ENCODE measurements at regions of chr20 and their contacts with region 1.

Region 1: GRCh38 chr20:35619196-35620095 is 3.8 kb downstream of the SPAG4 start:
- DNase-seq: peak; percentile 71 to 81 (median 76)
- H3K4me3 ChIP-seq: peak overlapping the region; percentile 36 to 75
- H3K4me3 Mint-ChIP-seq: peak overlapping the region; percentile 84 to 97 (median 90)
- H3K27ac ChIP-seq: peak overlapping the region; percentile 40
- H3K27ac Mint-ChIP-seq: peak overlapping the region; percentile 83 to 99 (median 89)
- H3K4me1 ChIP-seq: peaks cover 39% of the 10 kb centered on the region
- H3K4me1 Mint-ChIP-seq: peaks cover 17 to 47% (median 33%) of the 10 kb centered on the region in 4 donors
- H3K27me3 ChIP-seq: no peaks in the 10 kb centered on the region
- H3K27me3 Mint-ChIP-seq: peaks cover 0 to 3% of the 10 kb centered on the region in 2 donors

Region 2: DNA sequence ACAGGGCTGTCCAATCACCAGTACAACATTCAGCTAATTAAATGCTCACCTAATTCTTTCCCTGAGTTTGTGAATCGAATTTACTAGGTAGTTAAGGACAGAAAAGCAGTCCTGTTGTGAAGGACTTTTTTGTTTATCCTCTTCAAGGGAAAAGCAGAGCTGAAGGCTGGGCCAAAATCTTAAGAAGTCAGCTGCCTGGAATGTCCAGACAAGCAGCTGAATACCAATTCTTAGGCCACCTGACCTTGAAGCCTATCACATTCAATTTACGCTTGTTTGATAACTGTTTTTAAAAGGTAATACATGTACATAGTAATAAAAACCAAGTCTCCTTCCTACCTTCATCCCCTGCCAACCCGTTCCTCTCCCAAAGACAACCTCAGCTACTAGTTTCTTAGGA is 264.1 kb before region 1 on chr20:
- CTCF ChIA-PET with region 1: no interaction called
- POLR2A ChIA-PET with region 1: no interaction called
- intact Hi-C with region 1: no loop called
- DNase-seq: no peak
- H3K4me3 ChIP-seq: no peak overlapping the region
- H3K4me3 Mint-ChIP-seq: no peak overlapping the region
- H3K27ac ChIP-seq: no peak overlapping the region
- H3K27ac Mint-ChIP-seq: peak overlapping the region in 1 of 7 donors; percentile 59
- H3K4me1 ChIP-seq: no peaks in the 10 kb centered on the region
- H3K4me1 Mint-ChIP-seq: peaks cover 0 to 2% (median 0%) of the 10 kb centered on the region in 4 donors
- H3K27me3 ChIP-seq: no peaks in the 10 kb centered on the region
- H3K27me3 Mint-ChIP-seq: no peaks in the 10 kb centered on the region

Region 3: GRCh38 chr20:35368666-35369423 is 250.6 kb before region 1 on chr20:
- CTCF ChIA-PET with region 1: no interaction called
- POLR2A ChIA-PET with region 1: no interaction called
- intact Hi-C with region 1: no loop called
- DNase-seq: no peak
- H3K4me3 ChIP-seq: no peak overlapping the region
- H3K4me3 Mint-ChIP-seq: no peak overlapping the region
- H3K27ac ChIP-seq: no peak overlapping the region
- H3K27ac Mint-ChIP-seq: no peak overlapping the region
- H3K4me1 ChIP-seq: no peaks in the 10 kb centered on the region
- H3K4me1 Mint-ChIP-seq: peaks cover 0 to 2% (median 0%) of the 10 kb centered on the region in 4 donors
- H3K27me3 ChIP-seq: no peaks in the 10 kb centered on the region
- H3K27me3 Mint-ChIP-seq: no peaks in the 10 kb centered on the region

Region 4: DNA sequence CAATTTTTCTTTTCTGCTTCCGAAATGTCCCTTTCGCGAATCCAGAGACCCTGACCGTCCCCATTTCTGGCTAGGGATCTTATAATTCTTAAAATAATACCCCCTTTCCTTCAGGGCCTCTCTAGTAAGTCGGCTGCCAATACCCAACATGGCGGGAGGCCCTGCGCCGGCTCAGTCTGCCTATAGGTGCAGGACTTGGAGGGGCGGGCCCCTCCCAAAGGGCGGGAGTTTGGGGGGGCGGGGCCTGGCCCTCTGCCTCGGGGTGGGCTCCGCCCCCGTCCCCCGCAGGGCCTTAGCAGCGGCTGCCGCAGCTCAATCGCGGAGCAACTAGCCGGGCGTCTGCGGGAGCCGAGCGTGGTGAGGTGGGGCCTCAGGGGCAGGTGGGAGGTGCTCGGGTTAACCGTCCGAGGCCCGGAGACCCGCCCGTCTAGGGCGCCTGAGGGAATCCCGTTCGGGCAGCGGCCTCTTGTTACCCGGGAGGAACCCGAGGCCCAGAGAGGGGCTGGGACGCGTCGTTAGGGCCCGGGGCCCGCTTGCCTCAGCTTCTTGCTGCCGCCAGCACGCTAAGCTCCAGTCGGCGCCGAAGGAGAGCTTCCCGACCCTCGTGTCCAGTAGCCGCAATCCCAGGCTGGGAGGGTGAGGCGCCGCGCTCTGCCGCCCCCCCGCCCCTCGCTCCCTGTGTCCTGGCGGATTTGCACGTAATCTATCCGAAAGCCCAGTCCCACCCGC is 164.4 kb before region 1 on chr20 and contains the start of gene CEP250:
- CTCF ChIA-PET with region 1: no interaction called
- POLR2A ChIA-PET with region 1: interaction called, 3 read pairs
- intact Hi-C with region 1: loop called (anchors 2 kb)
- DNase-seq: peak; percentile 94 to 96 (median 96)
- H3K4me3 ChIP-seq: peak within 1 kb of the TSS; percentile 80 to 82
- H3K4me3 Mint-ChIP-seq: peak within 1 kb of the TSS; percentile 92 to 99 (median 97)
- H3K27ac ChIP-seq: peak within 1 kb of the TSS; percentile 95
- H3K27ac Mint-ChIP-seq: peak within 1 kb of the TSS; percentile 95 to 99 (median 98)
- H3K4me1 ChIP-seq: no peaks in the 10 kb centered on the region
- H3K4me1 Mint-ChIP-seq: peaks cover 7 to 29% (median 19%) of the 10 kb centered on the region in 4 donors
- H3K27me3 ChIP-seq: no peaks in the 10 kb centered on the region
- H3K27me3 Mint-ChIP-seq: no peaks in the 10 kb centered on the region
- total RNA-seq, gene CEP250: 71.3 to 76.9 TPM

Region 5: GRCh38 chr20:35502352-35502751 is 117.1 kb before region 1 on chr20:
- CTCF ChIA-PET with region 1: no interaction called
- POLR2A ChIA-PET with region 1: no interaction called
- intact Hi-C with region 1: no loop called
- DNase-seq: no peak
- H3K4me3 ChIP-seq: no peak overlapping the region
- H3K4me3 Mint-ChIP-seq: no peak overlapping the region
- H3K27ac ChIP-seq: no peak overlapping the region
- H3K27ac Mint-ChIP-seq: peak overlapping the region in 4 of 7 donors; percentile 25 to 75 (median 52)
- H3K4me1 ChIP-seq: peaks cover 13% of the 10 kb centered on the region
- H3K4me1 Mint-ChIP-seq: peaks cover 15 to 23% (median 17%) of the 10 kb centered on the region in 4 donors
- H3K27me3 ChIP-seq: no peaks in the 10 kb centered on the region
- H3K27me3 Mint-ChIP-seq: no peaks in the 10 kb centered on the region

Region 6: DNA sequence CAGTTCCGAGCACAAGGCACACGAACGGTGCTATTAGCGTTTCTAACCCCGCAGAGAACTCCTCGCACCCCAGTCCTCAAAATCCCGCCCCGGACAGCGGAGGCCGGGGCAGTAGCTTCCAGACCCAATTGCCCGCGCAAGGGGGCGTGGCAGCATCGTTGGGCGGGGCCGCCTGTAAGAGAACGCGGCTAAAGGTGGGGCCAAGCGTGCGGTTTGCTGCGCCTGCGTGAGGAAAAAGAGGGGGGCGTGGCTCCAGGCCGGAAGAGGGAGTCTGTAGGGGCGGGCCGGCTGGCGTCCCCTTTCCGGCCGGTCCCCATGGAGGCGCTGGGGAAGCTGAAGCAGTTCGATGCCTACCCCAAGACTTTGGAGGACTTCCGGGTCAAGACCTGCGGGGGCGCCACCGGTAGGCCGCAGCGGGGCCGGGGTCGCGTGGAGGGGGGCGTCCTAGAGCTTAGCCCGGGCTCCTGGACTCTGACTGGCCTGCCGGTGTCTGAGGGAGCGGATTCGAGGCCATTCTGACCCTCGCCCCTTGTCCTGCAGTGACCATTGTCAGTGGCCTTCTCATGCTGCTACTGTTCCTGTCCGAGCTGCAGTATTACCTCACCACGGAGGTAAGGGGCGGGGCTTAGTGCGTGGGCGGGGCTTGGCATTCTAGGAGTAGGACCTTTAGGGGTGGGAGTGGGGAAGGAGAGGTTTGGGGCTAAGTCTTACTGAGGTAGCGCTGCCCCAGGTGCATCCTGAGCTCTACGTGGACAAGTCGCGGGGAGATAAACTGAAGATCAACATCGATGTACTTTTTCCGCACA is 77.5 kb before region 1 on chr20 and contains the start of gene ERGIC3:
- CTCF ChIA-PET with region 1: interaction called, 4 read pairs
- POLR2A ChIA-PET with region 1: interaction called, 17 read pairs
- intact Hi-C with region 1: loop called (anchors 1 kb)
- DNase-seq: peak; percentile 95 to 96 (median 95)
- H3K4me3 ChIP-seq: peak within 1 kb of the TSS; percentile 37 to 76
- H3K4me3 Mint-ChIP-seq: peak within 1 kb of the TSS; percentile 86 to 93 (median 90)
- H3K27ac ChIP-seq: peak within 1 kb of the TSS; percentile 78
- H3K27ac Mint-ChIP-seq: peak within 1 kb of the TSS; percentile 86 to 95 (median 92)
- H3K4me1 ChIP-seq: peaks cover 15% of the 10 kb centered on the region
- H3K4me1 Mint-ChIP-seq: peaks cover 11 to 28% (median 21%) of the 10 kb centered on the region in 4 donors
- H3K27me3 ChIP-seq: no peaks in the 10 kb centered on the region
- H3K27me3 Mint-ChIP-seq: no peaks in the 10 kb centered on the region
- total RNA-seq, gene ERGIC3: 148 to 151 TPM

Region 7: DNA sequence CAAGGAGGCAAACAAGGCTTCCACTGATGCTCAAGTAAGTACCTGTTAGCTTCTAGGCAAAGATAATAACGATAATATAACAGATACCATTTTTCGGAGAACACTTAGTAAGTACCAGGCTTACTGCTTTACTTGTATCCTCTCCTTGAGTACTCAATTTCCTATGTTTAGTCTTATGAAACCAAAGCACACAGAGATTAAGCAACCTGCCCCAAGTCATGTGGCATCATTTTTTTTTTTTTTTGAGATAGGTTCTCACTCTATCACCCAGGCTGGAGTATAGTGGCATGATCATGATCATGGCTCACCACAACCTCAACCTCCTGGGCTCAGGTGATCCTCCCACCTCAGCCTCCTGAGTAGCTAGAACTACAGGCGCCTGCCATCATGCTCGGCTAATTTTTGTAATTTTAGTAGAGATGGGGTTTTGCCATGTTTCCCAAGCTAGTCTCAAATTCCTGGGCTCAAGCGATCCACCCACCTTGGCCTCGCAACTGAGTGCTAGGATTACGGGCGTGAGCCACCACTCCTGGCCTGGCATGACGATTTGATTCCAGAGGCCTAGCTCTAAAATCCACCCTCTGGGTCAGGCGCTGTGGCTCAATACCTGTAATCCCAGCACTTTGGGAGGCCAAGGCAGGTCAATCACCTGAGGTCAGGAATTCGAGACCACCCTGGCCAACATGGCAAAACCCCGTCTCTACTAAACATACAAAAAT is 10.1 kb after region 1 on chr20:
- CTCF ChIA-PET with region 1: interaction called, 18 read pairs
- POLR2A ChIA-PET with region 1: interaction called, 6 read pairs
- intact Hi-C with region 1: no loop called
- DNase-seq: no peak
- H3K4me3 ChIP-seq: no peak overlapping the region
- H3K4me3 Mint-ChIP-seq: no peak overlapping the region
- H3K27ac ChIP-seq: no peak overlapping the region
- H3K27ac Mint-ChIP-seq: peak overlapping the region in 1 of 7 donors; percentile 40
- H3K4me1 ChIP-seq: no peaks in the 10 kb centered on the region
- H3K4me1 Mint-ChIP-seq: peaks cover 0 to 6% (median 3%) of the 10 kb centered on the region in 4 donors
- H3K27me3 ChIP-seq: no peaks in the 10 kb centered on the region
- H3K27me3 Mint-ChIP-seq: no peaks in the 10 kb centered on the region

Region 8: GRCh38 chr20:35699127-35699975 is 79.9 kb after region 1 on chr20 and contains the starts of genes NFS1 and ROMO1:
- CTCF ChIA-PET with region 1: no interaction called
- POLR2A ChIA-PET with region 1: interaction called, 8 read pairs
- intact Hi-C with region 1: loop called (anchors 1 kb)
- DNase-seq: peak; percentile 82 to 88 (median 83)
- H3K4me3 ChIP-seq: peak within 1 kb of the TSS; percentile 90 to 92
- H3K4me3 Mint-ChIP-seq: peak within 1 kb of the TSS; percentile 92 to 99 (median 95)
- H3K27ac ChIP-seq: peak within 1 kb of the TSS; percentile 84
- H3K27ac Mint-ChIP-seq: peak within 1 kb of the TSS; percentile 93 to 99 (median 97)
- H3K4me1 ChIP-seq: peaks cover 38% of the 10 kb centered on the region
- H3K4me1 Mint-ChIP-seq: peaks cover 33 to 67% (median 42%) of the 10 kb centered on the region in 4 donors
- H3K27me3 ChIP-seq: no peaks in the 10 kb centered on the region
- H3K27me3 Mint-ChIP-seq: no peaks in the 10 kb centered on the region
- total RNA-seq, gene NFS1: 30.3 to 33.6 TPM
- total RNA-seq, gene ROMO1: 38.4 to 43.8 TPM

Measured in CD4-positive, alpha-beta memory T cell (primary cell).